K562 (cell line): ENCODE measurements at regions of chr4 and their contacts with region 1.

Region 1: GRCh38 chr4:24419181-24420034 is 164.9 kb downstream of the DHX15 start:
- DNase-seq: peak; percentile 74 to 76 (median 76)
- ATAC-seq: peak; percentile 96
- H3K4me3 ChIP-seq: no peak overlapping the region
- H3K27ac ChIP-seq: no peak overlapping the region
- H3K4me1 ChIP-seq: no peaks in the 10 kb centered on the region
- H3K27me3 ChIP-seq: no peaks in the 10 kb centered on the region
- CTCF ChIP-seq: peak; percentile 86 to 91 (median 91)
- EP300 ChIP-seq: no peak
- POLR2A ChIP-seq: no peak
- RAD21 ChIP-seq: peak; percentile 68 to 82

Region 2: GRCh38 chr4:22897520-22898108 is 1521.8 kb before region 1 on chr4:
- CTCF ChIA-PET with region 1: no interaction called
- POLR2A ChIA-PET with region 1: no interaction called
- in situ Hi-C with region 1: loop called (anchors 25 kb)
- intact Hi-C with region 1: no loop called
- DNase-seq: peak; percentile 26 to 40 (median 36)
- ATAC-seq: peak; percentile 54; the same call in 1 of the 3 replicates
- H3K4me3 ChIP-seq: no peak overlapping the region
- H3K27ac ChIP-seq: no peak overlapping the region
- H3K4me1 ChIP-seq: no peaks in the 10 kb centered on the region
- H3K27me3 ChIP-seq: no peaks in the 10 kb centered on the region
- CTCF ChIP-seq: peak; percentile 28 to 66 (median 60); a peak in 5 of 6 replicates
- EP300 ChIP-seq: no peak
- POLR2A ChIP-seq: no peak
- RAD21 ChIP-seq: peak; percentile 37 to 52; a peak in 3 of 4 replicates

Region 3: DNA sequence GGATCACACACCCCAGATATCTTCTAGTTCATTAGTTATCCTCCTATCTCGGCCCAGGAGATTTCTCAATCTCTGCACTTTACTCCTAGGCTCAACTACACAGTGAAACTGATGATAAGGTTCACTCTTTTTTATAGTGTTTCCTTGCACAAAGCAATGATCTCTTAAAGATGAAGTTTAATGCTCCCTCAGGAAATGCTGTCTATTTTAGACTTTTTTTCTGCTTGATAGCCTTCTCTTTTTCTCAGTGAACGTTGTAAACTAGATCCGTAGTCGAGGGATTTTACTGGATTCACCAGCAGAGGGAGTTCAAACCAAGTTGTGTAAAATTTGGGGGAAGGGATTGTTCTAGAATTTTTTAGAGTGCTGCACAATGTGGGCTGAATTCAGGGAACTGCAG is 1457.1 kb before region 1 on chr4:
- CTCF ChIA-PET with region 1: no interaction called
- POLR2A ChIA-PET with region 1: no interaction called
- in situ Hi-C with region 1: no loop called
- intact Hi-C with region 1: loop called (anchors 5 kb)
- DNase-seq: peak; percentile 4 to 18 (median 8)
- ATAC-seq: no peak
- H3K4me3 ChIP-seq: no peak overlapping the region
- H3K27ac ChIP-seq: no peak overlapping the region
- H3K4me1 ChIP-seq: no peaks in the 10 kb centered on the region
- H3K27me3 ChIP-seq: no peaks in the 10 kb centered on the region
- CTCF ChIP-seq: peak in 1 of 3 experiments; percentile 37; a peak in 2 of 6 replicates
- EP300 ChIP-seq: no peak
- POLR2A ChIP-seq: no peak
- RAD21 ChIP-seq: peak in 1 of 2 experiments; percentile 19; a peak in 1 of 4 replicates

Region 4: GRCh38 chr4:23135792-23136645 is 1283.4 kb before region 1 on chr4:
- CTCF ChIA-PET with region 1: no interaction called
- POLR2A ChIA-PET with region 1: no interaction called
- in situ Hi-C with region 1: loop called (anchors 25 kb)
- intact Hi-C with region 1: loop called (anchors 5 kb)
- DNase-seq: peak; percentile 21 to 60 (median 56)
- ATAC-seq: peak; percentile 63; the same call in 1 of the 3 replicates
- H3K4me3 ChIP-seq: no peak overlapping the region
- H3K27ac ChIP-seq: no peak overlapping the region
- H3K4me1 ChIP-seq: no peaks in the 10 kb centered on the region
- H3K27me3 ChIP-seq: no peaks in the 10 kb centered on the region
- CTCF ChIP-seq: peak in 2 of 3 experiments; percentile 57 to 59; a peak in 4 of 6 replicates
- EP300 ChIP-seq: no peak
- POLR2A ChIP-seq: no peak
- RAD21 ChIP-seq: peak in 1 of 2 experiments; percentile 52; a peak in 3 of 4 replicates

Region 5: DNA sequence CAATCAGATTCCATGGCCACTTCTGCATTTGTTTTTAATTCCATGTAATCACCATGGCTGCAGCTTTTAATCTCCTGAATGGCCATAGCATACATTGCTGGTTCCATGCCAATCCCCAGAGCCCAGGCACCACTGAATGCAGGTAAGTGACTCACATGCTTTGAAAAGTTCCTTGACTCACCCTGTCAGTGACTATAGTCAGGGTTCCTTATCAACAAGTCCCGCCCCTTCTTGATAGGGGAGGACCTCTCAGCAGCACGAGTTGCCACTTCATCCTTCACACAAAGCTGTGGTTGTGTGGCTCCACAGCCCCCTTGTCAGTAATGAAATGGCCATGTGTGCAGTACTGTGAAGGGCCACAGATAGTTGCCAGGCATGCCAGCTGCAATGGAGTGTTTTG is 1046.1 kb before region 1 on chr4:
- CTCF ChIA-PET with region 1: no interaction called
- POLR2A ChIA-PET with region 1: no interaction called
- in situ Hi-C with region 1: no loop called
- intact Hi-C with region 1: loop called (anchors 10 kb)
- DNase-seq: peak; percentile 16 to 44 (median 22)
- ATAC-seq: 0 out of 3 replicates have a peak, but pooled peaks have one; percentile 41
- H3K4me3 ChIP-seq: no peak overlapping the region
- H3K27ac ChIP-seq: no peak overlapping the region
- H3K4me1 ChIP-seq: no peaks in the 10 kb centered on the region; a peak in 1 of 5 replicates
- H3K27me3 ChIP-seq: no peaks in the 10 kb centered on the region
- CTCF ChIP-seq: no peak
- EP300 ChIP-seq: no peak
- POLR2A ChIP-seq: no peak
- RAD21 ChIP-seq: no peak